ENCODE measurements at regions of chr9 and their contacts with region 1.

Region 1: DNA sequence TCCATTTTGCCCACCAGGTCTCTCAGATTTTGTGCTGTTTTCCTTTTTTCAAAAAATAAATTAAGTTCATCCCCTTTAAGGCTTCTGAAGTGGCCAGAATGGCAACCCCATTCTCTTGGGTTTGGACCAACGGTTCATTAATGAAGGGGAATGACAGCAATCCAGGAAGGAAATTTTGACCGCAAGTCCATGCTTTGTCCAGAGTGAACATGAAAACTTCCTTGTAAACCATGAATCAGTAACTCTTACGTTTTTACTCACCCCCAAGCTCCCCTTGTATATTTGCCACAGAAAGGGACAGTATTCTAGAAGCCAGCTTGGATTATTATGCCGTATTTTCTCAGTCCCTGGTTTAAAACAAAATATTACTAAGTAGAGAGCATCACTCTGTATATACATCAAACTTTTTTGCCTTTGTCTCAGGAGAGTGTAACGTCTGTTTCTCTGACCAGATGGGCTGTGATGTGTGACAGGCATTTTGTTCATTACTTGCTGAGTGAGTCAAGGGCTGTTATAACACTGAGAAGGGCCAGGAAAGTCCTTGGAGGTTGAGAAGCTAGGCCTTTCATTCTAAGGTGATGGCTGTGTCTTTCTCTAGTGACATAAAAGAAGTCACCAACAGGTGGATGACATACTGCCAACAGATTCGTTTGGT is 148.2 kb downstream of the SMARCA2 start:
- DNase-seq: peak in 1 of 3 donors; percentile 39
- H3K4me3 ChIP-seq: peak overlapping the region in 2 of 7 experiments; percentile 16 to 44
- H3K27ac ChIP-seq: no peak overlapping the region
- H3K4me1 ChIP-seq: peaks cover 29 to 54% (median 42%) of the 10 kb centered on the region in 4 experiments
- H3K27me3 ChIP-seq: no peaks in the 10 kb centered on the region

Region 2: DNA sequence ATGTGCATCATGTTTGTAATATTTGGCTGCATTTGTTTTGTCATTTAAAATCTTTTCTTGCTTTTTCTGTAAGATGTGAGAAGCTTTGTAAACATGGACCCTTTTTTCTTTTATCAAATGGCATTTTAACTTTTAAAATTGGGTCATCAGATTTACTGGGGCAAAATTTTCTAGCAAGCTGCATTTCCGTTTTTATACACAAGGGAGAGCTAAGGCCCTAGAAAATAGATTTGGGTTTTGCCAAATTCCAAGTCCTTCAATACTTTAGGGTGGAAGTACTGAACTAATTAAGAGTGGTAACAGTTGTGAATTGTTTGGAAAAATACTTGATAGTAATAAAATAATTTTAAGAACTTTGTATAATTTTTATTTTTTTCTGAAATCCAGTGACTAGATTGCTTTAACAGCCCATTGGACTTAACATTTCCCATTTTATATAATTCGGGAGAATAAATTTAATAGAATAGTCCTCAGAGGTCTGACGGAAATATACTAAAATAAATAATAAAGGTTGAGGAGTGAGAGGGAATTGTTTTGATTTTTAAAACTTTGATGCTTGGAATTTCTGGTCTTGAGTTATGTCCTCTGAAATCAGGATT is 30.8 kb before region 1 on chr9:
- CTCF ChIA-PET with region 1: interaction called, 13 read pairs
- POLR2A ChIA-PET with region 1: no interaction called
- DNase-seq: peak; percentile 39 to 65 (median 59)
- H3K4me3 ChIP-seq: no peak overlapping the region
- H3K27ac ChIP-seq: no peak overlapping the region
- H3K4me1 ChIP-seq: peaks cover 0 to 7% (median 0%) of the 10 kb centered on the region in 4 experiments
- H3K27me3 ChIP-seq: no peaks in the 10 kb centered on the region

Region 3: GRCh38 chr9:2151171-2151570 is 12.2 kb before region 1 on chr9:
- CTCF ChIA-PET with region 1: interaction called, 28 read pairs
- POLR2A ChIA-PET with region 1: no interaction called
- DNase-seq: no peak
- H3K4me3 ChIP-seq: no peak overlapping the region
- H3K27ac ChIP-seq: no peak overlapping the region
- H3K4me1 ChIP-seq: peaks cover 10 to 41% (median 16%) of the 10 kb centered on the region in 4 experiments
- H3K27me3 ChIP-seq: no peaks in the 10 kb centered on the region

Region 4: DNA sequence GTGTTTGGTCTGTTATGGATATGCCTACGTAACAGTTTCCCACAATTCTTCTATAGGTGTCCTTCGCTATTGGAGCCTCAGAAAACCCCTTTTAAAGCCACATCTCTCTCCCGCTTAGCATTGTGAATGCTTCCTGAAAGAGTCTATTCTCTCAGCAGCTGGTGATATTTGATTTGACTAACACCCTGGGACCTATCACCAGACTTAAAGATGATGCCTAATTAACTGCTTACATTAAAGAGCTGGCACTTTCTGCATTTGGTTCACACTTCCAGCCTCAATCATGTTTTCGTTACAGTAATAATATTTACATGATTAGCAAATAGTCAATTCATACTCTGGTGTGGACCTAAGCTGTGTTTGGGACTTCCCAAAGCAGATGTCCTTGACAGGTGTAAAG is 368.1 kb after region 1 on chr9:
- CTCF ChIA-PET with region 1: no interaction called
- POLR2A ChIA-PET with region 1: no interaction called
- DNase-seq: no peak
- H3K4me3 ChIP-seq: no peak overlapping the region
- H3K27ac ChIP-seq: no peak overlapping the region
- H3K4me1 ChIP-seq: no peaks in the 10 kb centered on the region
- H3K27me3 ChIP-seq: peaks cover 0 to 1% (median 0%) of the 10 kb centered on the region in 5 experiments